Sciatic nerve (tissue), 2 donors: ENCODE measurements at regions of chr4 and their contacts with region 1.

Region 1: GRCh38 chr4:157363360-157363759 is 142.8 kb downstream of the GRIA2 start:
- DNase-seq: no peak
- ATAC-seq: no peak

Region 2: DNA sequence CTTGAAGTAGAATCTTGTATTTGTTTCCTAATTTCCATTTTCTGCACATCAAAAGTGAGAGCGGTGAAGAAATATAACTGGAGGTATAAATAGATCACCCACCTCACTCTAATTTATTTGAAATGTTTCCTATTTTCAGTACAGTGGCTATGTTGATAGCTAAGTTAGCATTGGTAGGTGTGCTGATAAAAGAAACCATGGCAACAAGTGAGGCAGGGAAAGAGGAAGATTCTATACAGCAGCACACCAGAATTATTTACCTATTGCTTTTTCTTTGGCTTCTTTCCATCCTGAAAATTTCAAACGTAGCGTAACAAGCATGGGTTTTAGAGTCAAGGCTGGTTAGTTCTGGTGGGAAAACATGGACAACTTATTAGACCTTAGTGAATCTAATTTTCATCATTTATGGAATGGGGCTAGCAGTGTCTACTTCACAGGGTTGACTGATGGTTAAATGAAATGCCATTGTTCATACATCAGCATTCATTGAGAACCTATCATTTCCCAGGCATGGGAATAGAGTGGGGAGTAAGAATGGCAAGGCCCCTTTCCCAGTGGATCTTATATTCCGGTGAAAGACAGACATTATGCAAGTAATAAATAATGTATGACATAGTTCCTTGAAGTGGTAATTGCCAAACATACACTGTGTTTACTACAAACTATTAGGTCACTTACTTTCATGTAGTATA is 1379.1 kb before region 1 on chr4:
- intact Hi-C with region 1: loop called (anchors 5 kb)
- DNase-seq: no peak
- ATAC-seq: no peak

Region 3: GRCh38 chr4:157291071-157291470 is 72.3 kb before region 1 on chr4:
- intact Hi-C with region 1: loop called (anchors 2 kb)
- DNase-seq: no peak
- ATAC-seq: no peak

Region 4: GRCh38 chr4:158327525-158327924 is 964.2 kb after region 1 on chr4:
- intact Hi-C with region 1: no loop called
- DNase-seq: no peak
- ATAC-seq: no peak